ENCODE measurements at regions of chr1 and their contacts with region 1.

Region 1: DNA sequence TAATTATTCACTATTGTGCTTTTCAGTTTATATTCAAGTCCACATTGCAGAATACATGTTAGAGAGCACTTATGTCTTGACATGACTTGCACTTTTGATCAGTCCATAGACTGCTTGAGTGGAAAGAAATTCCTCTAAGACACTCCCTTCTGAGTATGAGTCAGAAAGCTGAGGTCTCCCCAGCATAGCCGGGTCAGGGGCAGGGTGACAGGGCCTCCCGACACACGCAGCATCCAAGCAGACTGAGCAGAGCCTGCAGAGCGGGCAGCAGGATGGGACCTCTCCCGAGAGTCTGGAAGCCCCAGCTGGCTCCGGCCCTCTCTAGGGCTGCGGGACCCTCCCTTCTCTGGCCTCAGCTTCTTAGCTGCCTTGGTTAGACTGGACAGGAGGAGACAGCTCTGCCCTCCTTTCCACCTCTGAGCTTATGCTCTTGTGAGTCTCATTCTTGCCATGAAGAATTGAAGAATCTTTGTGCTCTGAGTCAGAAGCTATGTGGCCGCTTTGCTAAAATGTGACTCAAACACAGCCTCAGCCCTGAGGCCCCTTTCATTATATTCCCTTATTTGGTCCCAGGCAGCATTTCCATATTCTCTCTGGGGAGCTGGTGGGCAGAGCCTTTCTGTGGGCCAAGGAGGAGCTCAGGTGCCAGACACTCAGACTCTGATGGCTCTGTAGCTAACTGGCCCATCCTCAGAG is 11.2 kb upstream of the CAPN2 start:
- DNase-seq: peak; percentile 78 to 86
- H3K4me3 ChIP-seq: no peak overlapping the region
- H3K4me3 Mint-ChIP-seq: peak overlapping the region; percentile 1
- H3K27ac Mint-ChIP-seq: peak overlapping the region; percentile 82
- H3K4me1 ChIP-seq: peaks cover 36% of the 10 kb centered on the region
- H3K4me1 Mint-ChIP-seq: peaks cover 45% of the 10 kb centered on the region
- H3K27me3 ChIP-seq: no peaks in the 10 kb centered on the region
- H3K27me3 Mint-ChIP-seq: no peaks in the 10 kb centered on the region
- CTCF ChIP-seq: no peak

Region 2: GRCh38 chr1:223712194-223712849 is 11.2 kb after region 1 on chr1 and contains the start of gene CAPN2:
- CTCF ChIA-PET with region 1: interaction called, 4 read pairs
- POLR2A ChIA-PET with region 1: interaction called, 5 read pairs
- intact Hi-C with region 1: loop called (anchors 1 kb)
- DNase-seq: peak; percentile 69 to 91
- H3K4me3 ChIP-seq: peak within 1 kb of the TSS; percentile 97
- H3K4me3 Mint-ChIP-seq: peak within 1 kb of the TSS; percentile 73
- H3K27ac Mint-ChIP-seq: peak within 1 kb of the TSS; percentile 14
- H3K4me1 ChIP-seq: peaks cover 82% of the 10 kb centered on the region
- H3K4me1 Mint-ChIP-seq: peaks cover 54% of the 10 kb centered on the region
- H3K27me3 ChIP-seq: no peaks in the 10 kb centered on the region
- H3K27me3 Mint-ChIP-seq: no peaks in the 10 kb centered on the region
- CTCF ChIP-seq: peak; percentile 45 to 63
- total RNA-seq, gene CAPN2: 151 and 157 TPM in 2 replicates

Region 3: DNA sequence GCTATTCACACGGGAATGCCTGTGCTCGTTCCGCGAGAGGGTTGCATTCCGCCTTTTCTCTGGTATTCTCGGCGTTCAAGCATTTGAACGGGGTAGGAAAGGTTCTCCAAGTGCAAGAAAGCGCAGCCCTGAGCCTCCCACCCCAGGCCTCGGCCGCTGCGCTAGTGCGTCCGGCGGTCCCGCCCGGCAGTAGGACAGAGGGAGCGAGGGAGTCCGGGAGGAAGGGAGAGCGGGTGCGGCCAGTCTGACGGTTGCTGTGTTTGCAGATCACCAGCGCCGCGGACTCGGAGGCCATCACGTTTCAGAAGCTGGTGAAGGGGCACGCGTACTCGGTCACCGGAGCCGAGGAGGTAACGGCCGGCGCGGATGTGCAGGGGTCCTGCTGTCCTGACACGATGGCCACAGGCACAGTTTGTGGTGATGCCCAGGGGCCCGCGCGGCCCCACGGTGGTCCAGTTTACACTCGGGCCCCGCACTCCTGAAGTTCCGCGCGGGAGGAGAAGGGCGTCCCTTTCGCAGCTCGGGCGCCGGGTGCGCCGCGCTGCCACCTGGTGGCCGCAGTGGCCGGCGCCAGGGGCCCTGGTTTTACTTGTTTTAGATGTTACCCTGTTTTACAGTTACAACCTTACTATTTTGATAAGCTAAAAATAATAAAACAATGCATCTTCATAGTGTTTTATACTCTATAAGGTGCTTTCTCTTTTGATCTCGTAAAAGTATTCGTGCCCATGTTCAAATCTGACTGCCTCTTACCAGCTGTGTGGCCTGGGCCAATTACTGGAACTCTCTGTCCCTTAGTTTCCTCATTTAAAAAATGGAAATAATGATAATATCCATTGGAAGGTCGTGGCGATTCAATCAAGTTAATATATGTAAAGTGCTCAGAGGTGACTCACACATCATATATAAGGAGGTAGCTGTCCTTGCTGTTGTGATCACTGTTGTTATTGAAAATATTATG is 48.0 kb after region 1 on chr1:
- CTCF ChIA-PET with region 1: interaction called, 6 read pairs
- POLR2A ChIA-PET with region 1: no interaction called
- intact Hi-C with region 1: loop called (anchors 1 kb)
- DNase-seq: peak in 1 of 2 experiments; percentile 63
- H3K4me3 ChIP-seq: no peak overlapping the region
- H3K4me3 Mint-ChIP-seq: no peak overlapping the region
- H3K27ac Mint-ChIP-seq: no peak overlapping the region
- H3K4me1 ChIP-seq: no peaks in the 10 kb centered on the region
- H3K4me1 Mint-ChIP-seq: peaks cover 23% of the 10 kb centered on the region
- H3K27me3 ChIP-seq: no peaks in the 10 kb centered on the region
- H3K27me3 Mint-ChIP-seq: no peaks in the 10 kb centered on the region
- CTCF ChIP-seq: peak; percentile 71 to 89

Region 4: GRCh38 chr1:224051086-224051406 is 350.0 kb after region 1 on chr1:
- CTCF ChIA-PET with region 1: interaction called, 9 read pairs
- POLR2A ChIA-PET with region 1: no interaction called
- intact Hi-C with region 1: loop called (anchors 1 kb)
- DNase-seq: no peak
- H3K4me3 ChIP-seq: no peak overlapping the region
- H3K4me3 Mint-ChIP-seq: no peak overlapping the region
- H3K27ac Mint-ChIP-seq: no peak overlapping the region
- H3K4me1 ChIP-seq: no peaks in the 10 kb centered on the region
- H3K4me1 Mint-ChIP-seq: no peaks in the 10 kb centered on the region
- H3K27me3 ChIP-seq: no peaks in the 10 kb centered on the region
- H3K27me3 Mint-ChIP-seq: no peaks in the 10 kb centered on the region
- CTCF ChIP-seq: no peak

Region 5: DNA sequence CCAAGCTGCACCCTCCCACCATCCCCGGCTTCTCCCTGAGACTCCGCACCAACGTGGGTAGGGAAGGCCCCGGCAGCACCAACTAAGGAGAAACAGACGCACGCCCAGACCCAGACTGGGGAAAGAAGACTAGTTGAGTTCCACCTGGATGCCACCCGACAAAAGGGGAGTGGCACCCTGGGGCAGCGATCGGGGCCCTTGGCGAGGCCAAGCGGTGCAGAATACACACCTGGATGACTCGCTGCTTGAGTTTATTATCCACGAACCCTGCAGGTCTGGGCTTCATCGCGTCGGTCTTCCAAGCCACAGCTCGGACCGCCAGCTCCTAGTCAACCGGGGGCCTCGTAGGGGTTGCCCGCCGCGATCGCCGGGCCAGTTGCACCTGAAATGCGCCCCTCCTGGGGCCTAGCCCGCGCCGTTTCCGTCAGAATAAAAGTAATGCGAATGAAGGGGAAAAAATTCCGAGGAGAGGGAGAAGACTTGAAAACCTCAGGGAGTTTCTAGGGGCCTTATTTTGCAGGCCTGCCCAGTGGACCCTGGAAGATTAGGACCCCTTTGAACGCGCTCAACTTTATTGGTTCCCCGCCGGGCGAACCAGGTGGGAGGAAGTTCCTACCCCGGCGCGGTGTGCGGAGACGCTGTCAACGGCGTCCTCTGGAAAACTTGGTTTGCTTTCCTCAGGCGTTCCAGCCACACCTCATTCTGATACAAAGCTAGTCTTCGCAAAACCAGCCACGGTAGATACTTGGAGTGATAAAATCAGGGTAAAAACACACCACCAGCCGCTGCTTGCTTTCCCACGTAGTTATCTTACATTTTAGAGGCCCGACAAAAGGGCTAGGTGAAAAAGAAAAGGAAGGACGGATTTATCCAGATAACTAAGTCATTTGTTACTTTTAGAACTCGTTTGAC is 629.0 kb after region 1 on chr1 and contains the start of gene NVL:
- CTCF ChIA-PET with region 1: no interaction called
- POLR2A ChIA-PET with region 1: no interaction called
- intact Hi-C with region 1: loop called (anchors 2 kb)
- DNase-seq: peak; percentile 88 to 92
- H3K4me3 ChIP-seq: peak within 1 kb of the TSS; percentile 76
- H3K4me3 Mint-ChIP-seq: peak within 1 kb of the TSS; percentile 92
- H3K27ac Mint-ChIP-seq: peak within 1 kb of the TSS; percentile 99
- H3K4me1 ChIP-seq: no peaks in the 10 kb centered on the region; the same call in 1 of the 2 replicates
- H3K4me1 Mint-ChIP-seq: peaks cover 20% of the 10 kb centered on the region
- H3K27me3 ChIP-seq: no peaks in the 10 kb centered on the region
- H3K27me3 Mint-ChIP-seq: no peaks in the 10 kb centered on the region
- CTCF ChIP-seq: no peak
- total RNA-seq, gene NVL: 45.0 and 52.3 TPM in 2 replicates

Measured in Caco-2 (cell line).